Naive thymus-derived CD4-positive, alpha-beta T cell (primary cell): ENCODE measurements at regions of chr6 and their contacts with region 1.

Region 1: DNA sequence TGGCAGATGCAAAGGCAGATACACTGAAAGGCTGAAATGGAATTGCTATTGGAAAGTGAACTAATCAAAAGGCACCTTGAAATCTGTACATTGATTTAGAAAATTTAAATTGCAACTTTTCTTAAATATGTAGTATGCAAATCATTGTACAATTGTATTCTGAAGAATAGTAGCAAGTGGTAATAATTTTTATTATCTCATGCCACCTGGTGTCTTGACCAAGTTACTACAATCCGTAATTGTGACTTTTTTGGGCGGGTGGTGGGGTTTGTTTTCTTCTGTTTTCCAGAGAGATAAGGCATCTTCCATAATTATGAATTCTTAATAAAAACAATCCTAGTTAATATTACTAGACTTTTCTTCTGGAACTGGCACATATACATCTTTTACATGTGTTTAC is 12.5 kb upstream of the BCKDHB start:
- DNase-seq: peak in 5 of 9 donors; percentile 31 to 36 (median 31)
- ATAC-seq: peak; percentile 67
- H3K4me3 ChIP-seq: no peak overlapping the region
- H3K4me3 Mint-ChIP-seq: no peak overlapping the region
- H3K27ac ChIP-seq: no peak overlapping the region
- H3K27ac Mint-ChIP-seq: no peak overlapping the region
- H3K4me1 ChIP-seq: no peaks in the 10 kb centered on the region
- H3K4me1 Mint-ChIP-seq: peaks cover 0 to 8% (median 7%) of the 10 kb centered on the region in 7 donors
- H3K27me3 ChIP-seq: no peaks in the 10 kb centered on the region
- H3K27me3 Mint-ChIP-seq: peaks cover 7 to 28% (median 12%) of the 10 kb centered on the region in 5 donors

Region 2: DNA sequence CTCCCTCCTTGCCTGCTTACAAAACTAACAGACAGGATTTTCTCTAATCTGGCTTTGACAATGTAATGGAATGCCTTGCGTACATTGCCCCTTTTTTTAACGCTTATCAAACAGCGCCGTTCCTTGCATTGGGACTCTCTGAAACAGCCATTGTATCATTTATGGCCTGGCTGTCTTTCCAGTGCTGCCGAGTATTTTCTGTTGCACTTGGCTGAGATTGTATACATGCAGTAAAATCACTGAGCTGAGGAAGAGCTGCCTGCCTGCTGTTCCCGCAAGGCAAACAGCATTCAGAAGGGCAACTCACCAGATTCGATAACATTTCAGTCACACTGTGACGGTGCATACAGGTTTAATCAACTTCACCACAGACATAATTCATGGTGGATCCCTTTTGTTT is 356.8 kb before region 1 on chr6:
- CTCF ChIA-PET with region 1: no interaction called
- POLR2A ChIA-PET with region 1: no interaction called
- intact Hi-C with region 1: no loop called
- DNase-seq: no peak
- ATAC-seq: no peak
- H3K4me3 ChIP-seq: no peak overlapping the region
- H3K4me3 Mint-ChIP-seq: no peak overlapping the region
- H3K27ac ChIP-seq: no peak overlapping the region
- H3K27ac Mint-ChIP-seq: no peak overlapping the region
- H3K4me1 ChIP-seq: no peaks in the 10 kb centered on the region
- H3K4me1 Mint-ChIP-seq: no peaks in the 10 kb centered on the region
- H3K27me3 ChIP-seq: no peaks in the 10 kb centered on the region
- H3K27me3 Mint-ChIP-seq: peaks cover 0 to 13% (median 7%) of the 10 kb centered on the region in 5 donors

Region 3: DNA sequence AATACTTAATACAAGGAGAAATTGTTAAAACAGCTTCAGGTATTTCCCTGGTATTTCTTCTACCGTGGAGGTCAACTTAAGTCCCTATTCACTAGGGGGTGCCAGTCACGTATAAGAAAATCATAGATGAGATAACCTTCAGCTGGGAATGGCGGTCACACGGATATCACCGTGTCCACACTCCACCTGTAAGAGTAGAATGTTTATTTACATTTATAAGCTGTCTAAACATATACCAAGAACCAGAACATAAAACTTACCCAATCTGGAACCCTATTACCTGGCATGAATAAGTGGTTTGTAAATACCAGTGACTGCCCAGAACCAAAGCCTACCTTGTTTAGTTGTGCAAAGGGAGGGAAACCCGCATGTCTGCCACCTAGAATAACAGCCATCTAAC is 144.8 kb before region 1 on chr6:
- CTCF ChIA-PET with region 1: interaction called, 18 read pairs
- POLR2A ChIA-PET with region 1: no interaction called
- intact Hi-C with region 1: loop called (anchors 1 kb)
- DNase-seq: peak in 8 of 9 donors; percentile 36 to 61 (median 44)
- ATAC-seq: peak; percentile 65
- H3K4me3 ChIP-seq: no peak overlapping the region
- H3K4me3 Mint-ChIP-seq: peak overlapping the region in 5 of 10 donors; percentile 10 to 55 (median 16)
- H3K27ac ChIP-seq: no peak overlapping the region
- H3K27ac Mint-ChIP-seq: peak overlapping the region in 1 of 9 donors; percentile 56
- H3K4me1 ChIP-seq: peaks cover 4 to 16% of the 10 kb centered on the region in 2 donors
- H3K4me1 Mint-ChIP-seq: peaks cover 13 to 25% (median 19%) of the 10 kb centered on the region in 7 donors
- H3K27me3 ChIP-seq: no peaks in the 10 kb centered on the region
- H3K27me3 Mint-ChIP-seq: peaks cover 32 to 57% (median 43%) of the 10 kb centered on the region in 5 donors

Region 4: DNA sequence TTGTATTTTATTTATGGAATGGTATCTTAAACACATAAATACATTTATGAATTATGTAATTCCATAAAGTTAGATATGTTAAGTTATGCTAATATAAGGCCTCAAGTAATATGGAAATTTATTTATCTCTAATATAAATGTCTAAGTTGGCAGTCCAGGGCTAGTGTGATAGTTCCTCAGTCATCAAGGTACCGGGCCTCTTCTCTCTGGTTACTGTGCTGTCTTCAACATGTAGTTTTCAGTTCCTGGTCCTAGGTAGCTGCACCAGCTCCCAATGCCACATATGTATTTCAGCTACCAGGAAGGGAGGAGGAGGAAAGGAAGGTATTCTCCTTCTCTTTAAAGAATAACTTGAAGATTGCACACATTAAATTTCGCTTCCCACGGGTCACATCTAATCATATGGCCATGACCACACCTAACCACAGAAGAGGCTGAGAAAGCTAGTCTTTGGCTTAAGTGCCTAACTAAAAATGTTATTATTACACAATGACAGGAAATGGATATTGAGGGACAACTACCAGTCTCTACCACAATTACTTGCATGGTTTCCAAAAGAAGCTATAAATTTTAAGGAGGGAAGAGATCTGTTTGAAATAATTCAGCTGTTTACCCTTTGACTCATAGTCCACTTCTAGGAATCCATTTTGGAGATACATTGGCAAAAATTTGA is 81.0 kb after region 1 on chr6:
- CTCF ChIA-PET with region 1: no interaction called
- POLR2A ChIA-PET with region 1: no interaction called
- intact Hi-C with region 1: no loop called
- DNase-seq: no peak
- ATAC-seq: no peak
- H3K4me3 ChIP-seq: no peak overlapping the region
- H3K4me3 Mint-ChIP-seq: no peak overlapping the region
- H3K27ac ChIP-seq: no peak overlapping the region
- H3K27ac Mint-ChIP-seq: no peak overlapping the region
- H3K4me1 ChIP-seq: no peaks in the 10 kb centered on the region
- H3K4me1 Mint-ChIP-seq: peaks cover 0 to 3% (median 0%) of the 10 kb centered on the region in 7 donors
- H3K27me3 ChIP-seq: no peaks in the 10 kb centered on the region
- H3K27me3 Mint-ChIP-seq: no peaks in the 10 kb centered on the region